Caco-2 (cell line): ENCODE measurements at regions of chr17 and their contacts with region 1.

Region 1: DNA sequence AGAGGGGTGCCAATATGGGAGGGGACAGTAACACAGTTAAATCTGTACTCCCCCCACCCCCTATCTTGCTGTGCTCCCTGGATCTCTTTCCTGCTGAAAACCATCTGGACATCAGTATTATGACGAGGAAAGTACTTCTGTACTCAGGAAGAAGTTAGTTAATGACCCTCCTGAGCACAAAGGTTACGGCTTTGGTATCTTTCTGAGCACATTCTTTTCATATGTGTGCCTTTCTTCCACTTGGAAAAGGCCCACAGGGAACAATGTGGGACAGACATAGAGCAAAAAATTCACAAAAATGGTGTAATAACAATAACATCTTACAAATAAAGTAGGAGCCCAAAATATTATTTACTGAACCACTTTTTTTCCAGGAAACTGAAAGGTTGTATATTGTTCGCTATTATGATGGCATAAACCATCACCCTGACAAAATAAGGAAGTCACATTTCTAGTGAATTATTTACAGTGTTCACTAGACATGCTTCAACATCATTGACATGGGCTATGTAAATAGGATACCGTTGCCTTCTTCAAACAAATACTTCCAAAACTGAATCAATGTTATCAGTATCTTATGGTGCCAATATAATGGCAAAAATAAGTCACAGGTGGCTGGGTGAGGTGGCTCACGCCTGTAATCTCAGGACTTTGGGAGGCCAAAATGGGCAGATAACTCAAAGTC is 5.5 kb downstream of the WIPI1 start:
- DNase-seq: peak in 1 of 2 experiments; percentile 39
- H3K4me3 ChIP-seq: no peak overlapping the region
- H3K4me3 Mint-ChIP-seq: peak overlapping the region; percentile 59
- H3K27ac Mint-ChIP-seq: peak overlapping the region; percentile 90
- H3K4me1 ChIP-seq: peaks cover 33% of the 10 kb centered on the region
- H3K4me1 Mint-ChIP-seq: peaks cover 12% of the 10 kb centered on the region
- H3K27me3 ChIP-seq: no peaks in the 10 kb centered on the region
- H3K27me3 Mint-ChIP-seq: no peaks in the 10 kb centered on the region
- CTCF ChIP-seq: no peak

Region 2: DNA sequence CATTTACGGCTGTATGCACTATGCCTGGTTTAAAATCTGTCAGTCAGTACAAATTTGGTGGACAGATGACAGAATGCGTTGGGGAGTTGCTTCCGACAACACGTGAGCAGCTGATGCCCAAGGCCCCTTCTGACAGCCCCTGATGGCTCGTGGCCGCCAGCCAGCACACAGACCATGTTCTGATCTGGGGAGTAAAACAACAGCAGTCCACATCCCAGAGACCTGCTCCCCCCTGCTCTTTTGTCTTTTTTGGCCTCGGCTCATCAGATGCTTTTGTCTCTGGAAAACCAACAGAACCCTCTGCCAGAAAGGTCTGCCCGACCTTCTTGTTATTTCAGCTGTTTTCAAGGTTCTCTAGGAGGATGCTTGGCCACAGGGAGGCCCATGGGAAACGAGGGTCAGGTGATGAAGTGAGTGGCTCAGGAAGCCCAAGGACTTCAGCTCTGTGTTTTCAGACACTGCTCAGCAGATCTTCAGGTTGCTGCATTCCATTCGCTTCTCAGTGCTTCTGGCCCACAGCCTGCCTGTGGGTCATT is 149.7 kb before region 1 on chr17:
- CTCF ChIA-PET with region 1: no interaction called
- POLR2A ChIA-PET with region 1: no interaction called
- intact Hi-C with region 1: no loop called
- DNase-seq: no peak
- H3K4me3 ChIP-seq: no peak overlapping the region
- H3K4me3 Mint-ChIP-seq: no peak overlapping the region
- H3K27ac Mint-ChIP-seq: no peak overlapping the region
- H3K4me1 ChIP-seq: peaks cover 4% of the 10 kb centered on the region; the same call in 1 of the 2 replicates
- H3K4me1 Mint-ChIP-seq: no peaks in the 10 kb centered on the region
- H3K27me3 ChIP-seq: no peaks in the 10 kb centered on the region
- H3K27me3 Mint-ChIP-seq: no peaks in the 10 kb centered on the region
- CTCF ChIP-seq: no peak

Region 3: DNA sequence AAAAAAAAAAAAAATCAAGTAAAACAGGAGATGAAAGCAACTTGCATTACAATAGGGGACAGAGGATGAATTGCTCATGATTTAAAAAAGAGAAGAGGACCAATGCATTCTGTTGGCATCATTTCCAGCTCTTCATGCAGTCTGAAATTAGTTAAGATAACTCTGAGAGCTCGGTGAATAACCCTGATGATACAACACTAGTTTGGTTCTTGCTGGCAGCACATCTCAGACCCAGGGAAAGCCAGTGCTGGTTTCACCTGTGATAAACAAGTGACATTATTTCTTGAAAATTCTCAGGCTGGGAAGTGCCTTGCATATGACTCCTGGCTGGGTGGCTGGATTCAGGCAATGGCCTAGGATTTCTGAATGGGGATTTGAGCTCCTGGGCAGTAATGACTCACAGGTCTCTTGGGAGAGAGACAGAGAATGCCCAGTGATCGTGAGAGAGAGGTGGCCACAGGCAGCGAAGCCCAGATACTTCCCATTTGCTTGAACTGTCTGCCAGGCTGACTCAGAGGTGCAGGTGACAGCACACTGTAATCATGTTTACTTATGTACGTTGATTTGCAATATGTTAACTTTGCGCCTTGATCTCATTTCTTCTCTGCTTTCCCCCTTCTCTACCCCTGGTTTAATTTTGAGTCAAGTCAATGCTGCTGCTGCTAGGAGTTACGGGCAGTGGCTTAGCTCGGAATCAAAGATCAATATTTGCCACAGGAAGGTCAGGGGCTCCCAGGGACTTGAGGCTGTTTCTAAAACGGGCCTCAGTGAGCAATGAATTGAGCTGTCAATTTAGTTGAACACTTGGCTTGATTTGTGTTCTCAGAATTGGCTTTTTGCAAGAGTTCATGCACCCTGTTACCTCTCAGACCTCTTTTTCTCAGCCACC is 133.5 kb before region 1 on chr17:
- CTCF ChIA-PET with region 1: no interaction called
- POLR2A ChIA-PET with region 1: no interaction called
- intact Hi-C with region 1: no loop called
- DNase-seq: no peak
- H3K4me3 ChIP-seq: no peak overlapping the region
- H3K4me3 Mint-ChIP-seq: no peak overlapping the region
- H3K27ac Mint-ChIP-seq: no peak overlapping the region
- H3K4me1 ChIP-seq: no peaks in the 10 kb centered on the region
- H3K4me1 Mint-ChIP-seq: peaks cover 11% of the 10 kb centered on the region
- H3K27me3 ChIP-seq: no peaks in the 10 kb centered on the region
- H3K27me3 Mint-ChIP-seq: peaks cover 4% of the 10 kb centered on the region
- CTCF ChIP-seq: no peak

Region 4: GRCh38 chr17:68441064-68441770 is 10.6 kb before region 1 on chr17:
- CTCF ChIA-PET with region 1: interaction called, 12 read pairs
- POLR2A ChIA-PET with region 1: no interaction called
- intact Hi-C with region 1: loop called (anchors 1 kb)
- DNase-seq: peak; percentile 35 to 52
- H3K4me3 ChIP-seq: no peak overlapping the region
- H3K4me3 Mint-ChIP-seq: no peak overlapping the region
- H3K27ac Mint-ChIP-seq: peak overlapping the region; percentile 67
- H3K4me1 ChIP-seq: peaks cover 22% of the 10 kb centered on the region
- H3K4me1 Mint-ChIP-seq: peaks cover 18% of the 10 kb centered on the region
- H3K27me3 ChIP-seq: no peaks in the 10 kb centered on the region
- H3K27me3 Mint-ChIP-seq: no peaks in the 10 kb centered on the region
- CTCF ChIP-seq: no peak

Region 5: DNA sequence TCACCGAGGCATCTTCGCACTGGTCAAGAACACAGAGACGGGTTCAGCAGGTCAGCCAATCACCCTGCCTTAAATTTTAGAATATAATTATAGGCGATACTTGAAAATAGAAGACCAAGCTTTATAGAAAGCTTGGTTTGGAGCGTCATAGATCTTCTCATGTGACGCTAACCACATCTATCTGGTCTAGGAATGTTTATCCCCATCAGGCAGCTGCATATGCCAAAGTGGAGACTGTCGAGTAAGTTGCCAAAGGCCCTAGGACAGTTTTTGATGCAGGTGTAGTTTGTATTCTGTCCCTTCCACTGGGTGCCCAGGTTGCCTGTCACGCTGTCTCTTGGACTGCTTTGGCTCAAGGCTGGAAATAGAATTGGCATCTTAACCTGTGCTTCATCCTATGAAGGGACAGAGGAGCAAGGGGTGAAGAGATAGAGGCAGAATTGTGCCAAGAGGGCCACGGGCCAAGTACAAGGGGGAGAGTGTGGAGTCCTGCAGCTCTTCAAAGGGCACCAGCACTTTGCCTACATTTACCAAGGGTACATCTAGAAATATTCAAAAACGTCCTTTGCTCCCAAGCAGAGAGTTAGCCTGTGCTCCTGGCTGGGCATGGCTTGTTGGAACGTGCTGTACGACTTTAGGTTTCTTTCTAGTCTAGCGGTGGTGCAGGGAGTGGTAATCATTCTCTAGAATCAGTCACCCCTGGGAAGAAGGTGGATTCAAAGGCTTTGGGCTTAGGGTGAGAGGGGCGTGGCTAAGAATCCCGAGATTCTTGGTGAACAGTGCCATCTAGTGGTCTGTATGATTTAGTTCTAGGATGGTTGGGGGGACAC is 10.8 kb after region 1 on chr17:
- CTCF ChIA-PET with region 1: no interaction called
- POLR2A ChIA-PET with region 1: no interaction called
- intact Hi-C with region 1: no loop called
- DNase-seq: peak; percentile 79 to 86
- H3K4me3 ChIP-seq: no peak overlapping the region
- H3K4me3 Mint-ChIP-seq: no peak overlapping the region
- H3K27ac Mint-ChIP-seq: no peak overlapping the region
- H3K4me1 ChIP-seq: 0 out of 2 replicates have a peak, but pooled peaks cover 3% of the 10 kb centered on the region
- H3K4me1 Mint-ChIP-seq: peaks cover 8% of the 10 kb centered on the region
- H3K27me3 ChIP-seq: no peaks in the 10 kb centered on the region
- H3K27me3 Mint-ChIP-seq: peaks cover 3% of the 10 kb centered on the region
- CTCF ChIP-seq: peak; percentile 67 to 79

Region 6: DNA sequence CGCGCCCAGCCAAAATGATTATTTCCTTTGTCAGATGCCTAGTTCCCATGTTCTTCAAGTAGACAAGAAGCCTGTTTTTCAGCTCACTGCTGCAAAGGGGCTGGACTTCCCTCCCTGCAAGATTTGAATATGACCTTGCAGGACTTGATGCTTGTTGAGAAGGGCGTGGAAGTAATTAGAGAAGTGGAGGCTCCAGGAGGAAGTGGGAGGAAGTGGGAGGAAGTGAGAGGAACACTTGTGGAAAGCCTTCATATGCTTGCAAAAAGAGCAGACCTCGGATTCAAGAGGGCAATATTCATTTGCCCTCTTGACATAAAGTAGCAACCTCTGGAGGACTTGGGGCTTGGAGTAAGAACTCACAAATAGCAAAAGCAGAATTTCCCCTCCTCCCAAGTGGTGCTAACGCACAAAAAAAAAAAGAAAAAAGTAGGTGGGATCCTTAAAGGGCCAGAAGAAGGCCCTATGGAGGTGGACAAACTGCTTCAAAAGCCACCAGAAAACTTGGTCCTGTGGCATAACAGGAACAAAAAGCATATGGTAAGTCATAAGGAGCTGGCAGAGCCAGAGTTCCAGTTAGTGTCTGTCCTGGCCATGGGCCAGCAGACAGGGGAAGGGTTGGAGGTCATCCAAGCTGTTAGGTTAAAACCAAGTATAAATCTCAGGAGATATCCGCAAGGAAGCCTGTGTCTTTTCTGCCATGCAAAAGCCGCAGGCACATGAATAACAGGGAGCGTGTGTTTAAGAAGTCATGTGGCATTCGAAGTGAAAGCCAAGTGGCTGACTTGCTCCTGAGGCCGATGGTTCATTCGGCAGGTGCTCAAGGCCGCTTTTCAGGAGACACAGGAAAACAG is 39.8 kb after region 1 on chr17:
- CTCF ChIA-PET with region 1: no interaction called
- POLR2A ChIA-PET with region 1: no interaction called
- intact Hi-C with region 1: no loop called
- DNase-seq: no peak
- H3K4me3 ChIP-seq: no peak overlapping the region
- H3K4me3 Mint-ChIP-seq: no peak overlapping the region
- H3K27ac Mint-ChIP-seq: no peak overlapping the region
- H3K4me1 ChIP-seq: no peaks in the 10 kb centered on the region
- H3K4me1 Mint-ChIP-seq: peaks cover 1% of the 10 kb centered on the region
- H3K27me3 ChIP-seq: no peaks in the 10 kb centered on the region
- H3K27me3 Mint-ChIP-seq: no peaks in the 10 kb centered on the region
- CTCF ChIP-seq: no peak